Activated CD8-positive, alpha-beta T cell treated with anti-CD3 and anti-CD28 coated beads for 36 hours (primary cell): ENCODE measurements at regions of chr2 and their contacts with region 1.

Region 1: DNA sequence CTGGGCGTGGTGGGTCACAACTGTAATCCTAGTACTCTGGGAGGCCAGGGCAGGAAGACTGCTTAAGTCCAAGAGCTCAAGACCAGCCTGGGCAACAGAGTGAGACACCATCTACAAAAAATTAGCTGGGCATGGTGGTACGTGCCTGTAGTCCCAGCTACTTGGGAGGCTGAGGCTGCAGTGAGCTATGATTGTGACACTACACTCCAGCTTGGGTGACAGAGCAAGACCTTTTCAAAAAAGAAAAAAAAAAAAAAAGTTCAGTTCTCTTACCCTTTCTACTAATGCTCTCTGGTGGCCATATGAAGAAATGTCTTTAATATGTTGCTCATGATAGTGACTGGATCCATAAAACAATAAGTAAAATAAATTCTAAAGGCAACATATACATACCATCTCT is 14.9 kb downstream of the TYW5 start:
- DNase-seq: peak; percentile 9
- ATAC-seq: peak; percentile 80
- H3K4me3 Mint-ChIP-seq: no peak overlapping the region
- H3K27ac Mint-ChIP-seq: no peak overlapping the region
- H3K4me1 Mint-ChIP-seq: peaks cover 5% of the 10 kb centered on the region
- H3K27me3 Mint-ChIP-seq: no peaks in the 10 kb centered on the region
- CTCF ChIP-seq: peak; percentile 25

Region 2: DNA sequence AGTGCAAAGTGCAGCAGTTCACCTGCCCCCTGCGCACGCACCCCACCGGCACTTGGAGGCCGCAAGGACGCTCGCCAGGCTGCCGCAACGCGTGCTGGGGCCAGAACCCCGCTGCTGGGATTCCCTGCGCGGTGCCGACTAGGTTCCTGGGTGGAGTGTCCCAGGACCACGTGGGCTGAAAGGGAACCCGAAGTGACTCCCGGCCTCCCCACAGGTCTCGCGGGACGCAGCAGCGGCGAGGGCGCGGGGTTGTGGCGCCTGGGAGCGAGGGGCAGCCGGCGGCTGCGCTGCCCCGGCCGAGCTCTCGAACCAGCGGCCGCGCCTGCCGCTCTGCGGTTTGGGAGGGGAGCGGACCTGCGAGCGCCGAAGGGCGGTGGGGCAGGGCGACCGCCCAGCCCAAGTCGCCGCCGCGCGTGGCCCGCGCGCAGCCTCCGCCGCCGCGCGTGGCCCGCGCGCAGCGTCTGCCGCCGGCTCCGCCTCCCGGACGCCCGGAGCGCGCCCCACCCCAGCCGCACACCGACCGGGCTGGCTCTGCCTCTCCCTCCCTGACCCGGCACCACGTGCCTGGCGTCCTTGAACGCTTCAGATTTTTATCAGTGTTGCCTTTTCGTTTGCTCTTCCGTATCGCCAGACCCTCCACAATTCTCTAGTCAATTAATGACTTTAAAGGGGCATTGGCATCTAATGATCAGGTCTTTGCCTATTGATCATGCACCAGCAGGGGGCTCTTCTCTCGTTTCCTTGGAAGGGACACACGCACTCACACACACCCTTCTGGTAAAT is 89.5 kb before region 1 on chr2 and contains the start of gene FTCDNL1:
- CTCF ChIA-PET with region 1: interaction called, 5 read pairs
- POLR2A ChIA-PET with region 1: no interaction called
- intact Hi-C with region 1: loop called (anchors 10 kb)
- DNase-seq: peak; percentile 71
- ATAC-seq: peak; percentile 97
- H3K4me3 Mint-ChIP-seq: peak within 1 kb of the TSS; percentile 95
- H3K27ac Mint-ChIP-seq: peak within 1 kb of the TSS; percentile 90
- H3K4me1 Mint-ChIP-seq: peaks cover 12% of the 10 kb centered on the region
- H3K27me3 Mint-ChIP-seq: peaks cover 7% of the 10 kb centered on the region
- CTCF ChIP-seq: peak; percentile 55
- total RNA-seq, gene FTCDNL1: 1.9 to 2.0 TPM

Region 3: GRCh38 chr2:199929262-199929661 is 11.1 kb before region 1 on chr2:
- CTCF ChIA-PET with region 1: interaction called, 12 read pairs
- POLR2A ChIA-PET with region 1: interaction called, 3 read pairs
- intact Hi-C with region 1: no loop called
- DNase-seq: no peak
- ATAC-seq: no peak
- H3K4me3 Mint-ChIP-seq: no peak overlapping the region
- H3K27ac Mint-ChIP-seq: peak overlapping the region; percentile 57
- H3K4me1 Mint-ChIP-seq: peaks cover 2% of the 10 kb centered on the region
- H3K27me3 Mint-ChIP-seq: no peaks in the 10 kb centered on the region
- CTCF ChIP-seq: no peak